ENCODE measurements at regions of chr20 and their contacts with region 1.

Region 1: GRCh38 chr20:47356526-47357295 is at the start of gene ZMYND8:
- DNase-seq: peak; percentile 92 to 99 (median 96)
- ATAC-seq: peak; percentile 68
- H3K4me3 ChIP-seq: no peak within 1 kb of the TSS
- H3K4me1 ChIP-seq: peaks cover 98% of the 10 kb centered on the region
- CTCF ChIP-seq: no peak
- total RNA-seq, gene ZMYND8: 62.1 to 64.9 (median 62.1) TPM

Region 2: DNA sequence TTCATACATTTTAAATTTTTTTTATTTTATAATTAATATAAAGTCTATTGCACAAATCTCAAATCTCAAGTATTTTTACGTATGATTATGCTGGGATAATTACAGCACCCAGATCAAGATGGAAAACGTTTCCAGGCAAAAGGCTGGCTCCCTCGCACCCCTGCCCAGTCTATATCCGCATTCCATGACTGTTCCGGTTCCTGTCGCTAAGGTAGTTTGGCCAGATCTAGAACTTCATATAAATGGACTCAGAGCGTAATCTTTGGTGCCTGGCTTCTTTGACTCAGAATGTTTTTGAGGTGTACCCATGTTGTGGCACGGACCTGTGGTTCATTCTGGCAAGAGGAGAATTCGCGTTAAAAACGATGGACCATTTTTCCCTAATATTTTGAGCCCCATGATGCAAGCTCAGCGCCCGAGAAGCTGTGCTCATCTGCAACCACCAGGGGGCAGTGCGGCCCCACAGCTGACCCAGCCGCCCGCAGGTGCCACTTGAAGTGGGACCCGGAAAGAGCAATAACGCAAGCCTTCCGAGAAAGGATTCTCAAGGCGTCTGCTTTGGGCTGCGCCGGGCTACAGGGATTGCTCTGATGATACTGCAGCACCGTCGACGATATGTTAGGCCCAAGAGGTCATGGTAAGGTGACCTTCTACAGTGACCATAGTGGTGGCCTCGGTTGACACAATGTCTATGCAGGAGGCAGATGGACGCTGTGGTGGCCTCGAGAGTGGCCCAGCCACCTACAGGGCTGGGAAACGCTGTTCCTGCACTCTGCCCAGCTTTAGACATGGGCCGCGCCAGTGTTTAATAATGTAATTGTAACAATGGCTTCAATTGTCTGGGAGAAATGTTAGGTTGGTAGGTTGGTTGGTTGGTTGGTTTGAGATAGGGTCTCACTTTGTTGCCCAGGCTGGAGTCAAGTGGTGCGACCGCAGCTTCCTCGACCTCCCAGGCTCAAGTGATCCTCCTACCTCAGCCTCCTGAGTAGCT is 160.3 kb before region 1 on chr20:
- intact Hi-C with region 1: no loop called
- DNase-seq: peak; percentile 73 to 83 (median 77)
- ATAC-seq: peak; percentile 90
- H3K4me3 ChIP-seq: no peak overlapping the region
- H3K4me1 ChIP-seq: peaks cover 2% of the 10 kb centered on the region
- CTCF ChIP-seq: peak; percentile 93

Region 3: GRCh38 chr20:47317127-47317895 is 39.4 kb before region 1 on chr20:
- intact Hi-C with region 1: loop called (anchors 2 to 5 kb)
- DNase-seq: peak; percentile 48 to 83 (median 66)
- ATAC-seq: peak; percentile 59
- H3K4me3 ChIP-seq: no peak overlapping the region
- H3K4me1 ChIP-seq: peaks cover 66% of the 10 kb centered on the region
- CTCF ChIP-seq: no peak

Region 4: DNA sequence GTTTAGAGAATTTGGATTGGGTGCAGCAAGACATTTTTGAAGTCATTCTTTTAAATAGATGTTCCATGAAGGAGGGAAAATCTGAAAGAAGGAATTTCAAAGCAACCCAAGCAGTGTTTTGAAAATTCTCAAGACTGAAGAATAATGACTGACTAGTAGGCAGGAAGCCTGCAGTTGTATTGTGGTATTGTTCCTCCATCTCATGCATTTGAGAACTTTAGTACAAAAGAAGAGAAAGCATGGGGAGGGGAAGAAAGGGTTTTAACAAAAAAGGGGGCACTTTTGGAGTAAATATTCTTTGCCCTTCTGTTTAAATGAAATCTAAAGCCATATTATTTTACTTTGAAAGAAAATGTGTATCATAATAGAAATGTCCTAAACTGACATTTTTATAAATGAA is 151.6 kb after region 1 on chr20:
- intact Hi-C with region 1: no loop called
- DNase-seq: no peak
- ATAC-seq: no peak
- H3K4me3 ChIP-seq: no peak overlapping the region
- H3K4me1 ChIP-seq: peaks cover 4% of the 10 kb centered on the region
- CTCF ChIP-seq: no peak